ENCODE measurements at regions of chr15 and their contacts with region 1.

Region 1: DNA sequence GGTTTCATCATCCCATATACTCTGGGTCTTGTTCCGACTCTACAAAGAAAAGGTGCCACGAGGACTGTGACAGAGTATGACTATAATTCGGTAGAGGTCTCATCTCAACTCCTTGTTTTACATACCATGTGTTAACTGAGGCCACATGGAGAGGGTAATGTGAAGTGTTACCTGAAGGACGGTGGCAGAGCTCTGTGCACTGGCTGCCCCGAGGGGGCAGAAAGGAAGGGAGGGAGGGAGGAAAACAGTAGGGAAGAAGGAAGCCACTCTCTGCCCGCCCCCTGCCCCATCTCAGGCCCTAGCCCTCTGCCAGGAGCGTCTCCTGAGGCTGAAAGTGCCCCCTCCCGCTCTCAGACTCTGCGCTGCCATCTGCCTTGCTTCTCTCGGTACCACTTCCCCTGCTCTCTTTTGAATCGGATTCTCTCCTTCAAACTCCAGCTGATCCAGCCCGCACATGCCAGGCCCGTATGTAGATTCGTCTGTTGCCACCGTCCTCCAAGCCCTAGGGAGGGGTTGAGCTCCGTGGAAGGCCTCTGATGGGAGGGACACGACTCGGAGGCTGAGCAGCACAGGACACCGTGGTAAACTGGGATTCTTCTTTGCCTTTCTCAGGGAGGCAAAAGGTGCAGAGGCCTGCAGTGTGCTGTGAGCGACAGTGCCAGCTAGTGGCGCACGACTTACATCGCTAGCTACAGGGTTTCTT is 70.5 kb upstream of the ATP10A start:
- DNase-seq: peak; percentile 43 to 45
- ATAC-seq: peak; percentile 63 to 76
- H3K4me3 ChIP-seq: peak overlapping the region in 3 of 4 donors; percentile 18 to 39 (median 26)
- H3K27ac ChIP-seq: no peak overlapping the region
- H3K4me1 ChIP-seq: no peaks in the 10 kb centered on the region
- H3K27me3 ChIP-seq: no peaks in the 10 kb centered on the region
- CTCF ChIP-seq: peak; percentile 26 to 67 (median 50)
- POLR2A ChIP-seq: no peak

Region 2: DNA sequence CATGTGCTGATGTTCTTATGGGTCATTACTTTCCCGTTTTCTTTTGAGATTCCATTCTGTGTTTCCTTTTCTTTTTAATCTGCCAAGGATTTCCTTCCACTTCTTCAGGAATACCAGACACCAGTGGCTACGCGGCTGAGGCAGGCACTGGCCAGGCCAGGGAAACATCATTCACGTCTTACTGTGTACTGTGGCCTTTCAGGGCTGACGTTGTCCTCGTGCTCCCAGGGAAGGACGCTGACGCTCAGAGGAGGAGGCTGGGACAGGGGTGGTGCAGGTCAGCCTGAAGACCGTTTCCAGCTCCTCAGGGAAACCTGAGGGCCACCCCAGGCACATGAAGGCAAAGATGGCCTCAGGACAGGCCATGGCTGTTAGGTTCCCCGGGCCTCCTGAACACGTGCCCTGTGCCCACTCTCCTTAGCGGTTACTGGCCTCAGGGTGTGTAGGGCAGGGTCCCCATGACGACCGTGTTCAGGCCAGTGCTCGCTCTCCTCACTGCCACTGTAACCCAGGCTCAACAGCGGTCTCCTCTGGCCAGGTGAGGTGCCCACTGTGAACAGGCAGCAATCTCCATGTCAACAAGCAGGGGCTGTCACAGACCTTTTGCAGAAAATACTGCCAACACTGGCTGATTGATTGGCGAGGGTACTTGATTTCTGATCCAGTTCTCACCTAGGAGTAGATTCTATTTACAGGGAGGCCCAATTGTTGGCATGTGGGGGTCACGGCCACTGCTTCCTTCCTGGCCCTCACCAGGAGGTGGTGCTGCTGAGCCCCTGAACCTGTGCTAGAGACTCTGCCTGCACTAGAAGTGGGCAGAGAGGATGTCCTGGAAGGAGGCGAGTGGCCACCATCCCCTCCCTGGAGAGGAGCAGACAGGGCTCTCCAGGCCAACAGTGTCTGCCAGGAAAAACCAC is 240.0 kb before region 1 on chr15:
- in situ Hi-C with region 1: loop called in 1 of 4 experiments (anchors 5 kb)
- intact Hi-C with region 1: loop called (anchors 5 kb)
- DNase-seq: no peak
- ATAC-seq: peak; percentile 9 to 48
- H3K4me3 ChIP-seq: no peak overlapping the region
- H3K27ac ChIP-seq: no peak overlapping the region
- H3K4me1 ChIP-seq: peaks cover 0 to 3% of the 10 kb centered on the region in 2 donors
- H3K27me3 ChIP-seq: no peaks in the 10 kb centered on the region
- CTCF ChIP-seq: peak; percentile 34 to 65 (median 45)
- POLR2A ChIP-seq: no peak

Region 3: DNA sequence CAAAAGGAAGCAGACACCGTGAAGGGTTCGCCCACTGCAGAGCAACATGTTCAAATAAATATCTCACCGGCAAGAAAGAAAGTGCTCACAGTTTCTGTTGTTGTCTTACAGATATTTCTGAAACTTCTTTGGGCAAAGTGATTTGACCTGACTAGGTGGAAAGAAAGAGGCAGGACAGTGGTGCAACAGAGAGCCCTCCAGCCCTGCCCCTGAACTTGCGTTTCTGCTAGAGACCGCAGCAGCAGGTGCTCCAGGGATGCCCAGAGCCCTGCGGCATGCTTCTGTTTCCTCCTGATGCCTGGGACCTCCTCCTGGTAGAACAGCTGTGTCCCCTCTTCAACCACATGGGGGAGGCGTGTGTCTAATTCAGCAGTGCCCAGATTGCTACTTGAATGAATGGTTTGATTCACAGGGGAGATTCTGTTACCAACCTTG is 193.9 kb before region 1 on chr15:
- in situ Hi-C with region 1: no loop called
- intact Hi-C with region 1: loop called (anchors 10 kb)
- DNase-seq: no peak
- ATAC-seq: no peak
- H3K4me3 ChIP-seq: no peak overlapping the region
- H3K27ac ChIP-seq: no peak overlapping the region
- H3K4me1 ChIP-seq: peaks cover 11 to 13% of the 10 kb centered on the region in 2 donors
- H3K27me3 ChIP-seq: no peaks in the 10 kb centered on the region
- CTCF ChIP-seq: peak in 1 of 5 experiments; percentile 26
- POLR2A ChIP-seq: no peak

Region 4: GRCh38 chr15:25849151-25849921 is 84.3 kb before region 1 on chr15:
- in situ Hi-C with region 1: loop called in 1 of 4 experiments (anchors 25 kb)
- intact Hi-C with region 1: no loop called
- DNase-seq: no peak
- ATAC-seq: peak in 1 of 2 donors; percentile 24
- H3K4me3 ChIP-seq: peak overlapping the region in 1 of 4 donors; percentile 62
- H3K27ac ChIP-seq: peak overlapping the region in 1 of 4 donors; percentile 33
- H3K4me1 ChIP-seq: peaks cover 0 to 14% of the 10 kb centered on the region in 2 donors
- H3K27me3 ChIP-seq: no peaks in the 10 kb centered on the region
- CTCF ChIP-seq: no peak
- POLR2A ChIP-seq: no peak

Region 5: DNA sequence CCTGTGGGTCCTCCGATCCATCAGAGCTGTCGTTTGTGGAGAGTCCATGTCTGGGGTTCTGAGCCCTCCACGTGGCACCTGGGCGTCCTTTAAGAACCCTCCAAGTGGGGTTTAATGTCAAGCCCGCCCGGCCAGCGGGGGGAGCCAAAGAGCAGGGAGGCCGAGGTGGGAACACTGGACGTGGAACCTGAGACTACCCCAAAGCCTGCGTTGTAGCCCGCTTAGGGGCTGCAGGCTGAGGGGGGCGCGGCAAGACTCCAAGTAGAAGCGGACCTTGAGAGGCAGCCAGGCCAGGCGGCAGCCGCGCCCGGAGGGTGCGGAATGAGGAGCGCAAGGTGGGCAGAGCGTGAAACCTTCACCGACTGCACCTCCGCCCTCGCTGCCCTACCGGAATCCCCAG is 55.7 kb after region 1 on chr15:
- in situ Hi-C with region 1: loop called in 1 of 4 experiments (anchors 10 kb)
- intact Hi-C with region 1: no loop called
- DNase-seq: no peak
- ATAC-seq: no peak
- H3K4me3 ChIP-seq: no peak overlapping the region
- H3K27ac ChIP-seq: no peak overlapping the region
- H3K4me1 ChIP-seq: no peaks in the 10 kb centered on the region
- H3K27me3 ChIP-seq: no peaks in the 10 kb centered on the region
- CTCF ChIP-seq: no peak
- POLR2A ChIP-seq: no peak

Measured in gastrocnemius medialis (tissue), 4 donors.